ENCODE measurements at regions of chr1 and their contacts with region 1.

Region 1: GRCh38 chr1:150578965-150579798 is at the start of gene MCL1:
- DNase-seq: peak; percentile 95
- H3K4me3 Mint-ChIP-seq: peak within 1 kb of the TSS; percentile 99
- H3K27ac Mint-ChIP-seq: peak within 1 kb of the TSS; percentile 99
- H3K4me1 Mint-ChIP-seq: peaks cover 30% of the 10 kb centered on the region
- H3K27me3 Mint-ChIP-seq: no peaks in the 10 kb centered on the region
- CTCF ChIP-seq: no peak
- total RNA-seq, gene MCL1: 261 and 262 TPM in 2 replicates

Region 2: DNA sequence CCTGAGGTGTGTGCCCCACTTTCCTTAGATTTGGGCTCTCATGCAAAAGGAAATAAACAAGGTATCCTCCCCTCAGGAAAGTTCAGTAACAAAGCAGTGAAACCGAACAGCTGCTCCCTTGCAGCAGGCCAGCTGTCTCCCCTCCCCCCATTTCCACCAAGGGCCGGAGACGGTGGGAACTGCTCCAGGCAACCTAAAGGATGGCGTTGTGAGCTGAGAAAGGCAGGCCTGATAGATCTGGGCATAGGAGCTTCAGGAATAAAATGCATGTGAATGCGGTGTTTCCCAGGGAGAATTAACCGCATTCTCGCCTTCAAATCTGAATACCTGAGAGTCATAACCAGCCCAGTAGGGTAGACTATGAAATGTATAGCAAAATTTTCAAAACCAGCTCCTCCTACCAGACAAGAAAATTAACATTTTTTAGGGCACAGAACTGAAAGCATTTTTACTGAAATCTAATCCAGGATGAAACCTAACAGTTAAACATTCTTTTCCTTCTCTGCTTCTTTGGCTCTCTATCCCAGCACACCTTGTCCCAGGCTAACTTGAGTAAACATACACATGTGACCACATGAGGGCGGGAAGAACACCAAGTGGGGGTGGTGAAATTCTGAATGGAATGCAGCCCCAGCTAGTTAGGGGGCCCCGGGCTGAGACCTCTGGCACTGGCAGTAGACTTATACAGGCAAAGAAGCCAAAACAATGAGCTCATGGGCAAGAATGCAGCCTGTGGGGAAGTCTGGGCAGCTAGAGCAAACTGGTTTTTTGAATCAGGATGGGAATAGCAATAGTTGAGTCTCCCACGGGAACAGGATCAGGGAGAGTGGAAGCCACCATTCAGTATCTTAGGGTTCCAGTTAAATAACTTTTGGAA is 11.2 kb before region 1 on chr1:
- CTCF ChIA-PET with region 1: interaction called, 22 read pairs
- intact Hi-C with region 1: loop called (anchors 1 kb)
- DNase-seq: peak; percentile 92
- H3K4me3 Mint-ChIP-seq: peak overlapping the region; percentile 66
- H3K27ac Mint-ChIP-seq: peak overlapping the region; percentile 91
- H3K4me1 Mint-ChIP-seq: peaks cover 60% of the 10 kb centered on the region
- H3K27me3 Mint-ChIP-seq: no peaks in the 10 kb centered on the region
- CTCF ChIP-seq: no peak

Region 3: GRCh38 chr1:150603711-150604110 is 24.5 kb after region 1 on chr1:
- CTCF ChIA-PET with region 1: interaction called, 10 read pairs
- intact Hi-C with region 1: no loop called
- DNase-seq: no peak
- H3K4me3 Mint-ChIP-seq: no peak overlapping the region
- H3K27ac Mint-ChIP-seq: peak overlapping the region; percentile 100
- H3K4me1 Mint-ChIP-seq: peaks cover 24% of the 10 kb centered on the region
- H3K27me3 Mint-ChIP-seq: no peaks in the 10 kb centered on the region
- CTCF ChIP-seq: no peak

Region 4: DNA sequence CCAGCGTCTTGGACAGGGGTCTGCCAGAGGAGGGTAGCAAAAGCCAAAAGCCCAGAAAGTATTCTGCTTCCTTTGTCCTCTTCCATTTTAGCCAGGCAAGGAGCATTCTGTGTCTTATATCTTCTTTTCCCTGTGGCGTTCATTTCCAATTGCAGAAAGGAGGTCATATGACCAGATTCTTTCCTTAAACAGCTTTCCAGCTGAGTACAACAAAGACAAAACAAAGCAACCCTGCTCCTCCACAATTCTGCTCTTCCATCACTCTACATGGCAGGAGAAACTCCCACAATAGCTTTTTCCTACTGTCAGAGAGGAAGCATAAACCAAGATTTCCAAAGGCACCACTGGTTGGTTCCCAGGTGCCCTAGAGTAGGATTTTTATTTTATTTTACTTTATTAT is 30.6 kb after region 1 on chr1:
- CTCF ChIA-PET with region 1: interaction called, 10 read pairs
- intact Hi-C with region 1: loop called (anchors 2 kb)
- DNase-seq: no peak
- H3K4me3 Mint-ChIP-seq: no peak overlapping the region
- H3K27ac Mint-ChIP-seq: peak overlapping the region; percentile 65
- H3K4me1 Mint-ChIP-seq: peaks cover 56% of the 10 kb centered on the region
- H3K27me3 Mint-ChIP-seq: no peaks in the 10 kb centered on the region
- CTCF ChIP-seq: no peak

Region 5: GRCh38 chr1:150621497-150622302 is 42.5 kb after region 1 on chr1:
- CTCF ChIA-PET with region 1: interaction called, 6 read pairs
- intact Hi-C with region 1: loop called (anchors 2 kb)
- DNase-seq: peak; percentile 48
- H3K4me3 Mint-ChIP-seq: no peak overlapping the region
- H3K27ac Mint-ChIP-seq: peak overlapping the region; percentile 42
- H3K4me1 Mint-ChIP-seq: peaks cover 61% of the 10 kb centered on the region
- H3K27me3 Mint-ChIP-seq: no peaks in the 10 kb centered on the region
- CTCF ChIP-seq: peak; percentile 65

Region 6: GRCh38 chr1:150661156-150661555 is 82.0 kb after region 1 on chr1:
- CTCF ChIA-PET with region 1: no interaction called
- intact Hi-C with region 1: loop called (anchors 5 kb)
- DNase-seq: no peak
- H3K4me3 Mint-ChIP-seq: no peak overlapping the region
- H3K27ac Mint-ChIP-seq: no peak overlapping the region
- H3K4me1 Mint-ChIP-seq: peaks cover 19% of the 10 kb centered on the region
- H3K27me3 Mint-ChIP-seq: no peaks in the 10 kb centered on the region
- CTCF ChIP-seq: no peak

Region 7: GRCh38 chr1:150863724-150864123 is 284.5 kb after region 1 on chr1:
- CTCF ChIA-PET with region 1: no interaction called
- intact Hi-C with region 1: no loop called
- DNase-seq: no peak
- H3K4me3 Mint-ChIP-seq: no peak overlapping the region
- H3K27ac Mint-ChIP-seq: no peak overlapping the region
- H3K4me1 Mint-ChIP-seq: no peaks in the 10 kb centered on the region
- H3K27me3 Mint-ChIP-seq: no peaks in the 10 kb centered on the region
- CTCF ChIP-seq: no peak

Measured in Calu3 (cell line).